ENCODE measurements at regions of chr10 and their contacts with region 1.

Region 1: GRCh38 chr10:103592186-103593021 is 98.9 kb downstream of the NEURL1 start:
- DNase-seq: no peak
- H3K4me3 ChIP-seq: no peak overlapping the region
- H3K27me3 ChIP-seq: no peaks in the 10 kb centered on the region
- CTCF ChIP-seq: peak; percentile 76

Region 2: DNA sequence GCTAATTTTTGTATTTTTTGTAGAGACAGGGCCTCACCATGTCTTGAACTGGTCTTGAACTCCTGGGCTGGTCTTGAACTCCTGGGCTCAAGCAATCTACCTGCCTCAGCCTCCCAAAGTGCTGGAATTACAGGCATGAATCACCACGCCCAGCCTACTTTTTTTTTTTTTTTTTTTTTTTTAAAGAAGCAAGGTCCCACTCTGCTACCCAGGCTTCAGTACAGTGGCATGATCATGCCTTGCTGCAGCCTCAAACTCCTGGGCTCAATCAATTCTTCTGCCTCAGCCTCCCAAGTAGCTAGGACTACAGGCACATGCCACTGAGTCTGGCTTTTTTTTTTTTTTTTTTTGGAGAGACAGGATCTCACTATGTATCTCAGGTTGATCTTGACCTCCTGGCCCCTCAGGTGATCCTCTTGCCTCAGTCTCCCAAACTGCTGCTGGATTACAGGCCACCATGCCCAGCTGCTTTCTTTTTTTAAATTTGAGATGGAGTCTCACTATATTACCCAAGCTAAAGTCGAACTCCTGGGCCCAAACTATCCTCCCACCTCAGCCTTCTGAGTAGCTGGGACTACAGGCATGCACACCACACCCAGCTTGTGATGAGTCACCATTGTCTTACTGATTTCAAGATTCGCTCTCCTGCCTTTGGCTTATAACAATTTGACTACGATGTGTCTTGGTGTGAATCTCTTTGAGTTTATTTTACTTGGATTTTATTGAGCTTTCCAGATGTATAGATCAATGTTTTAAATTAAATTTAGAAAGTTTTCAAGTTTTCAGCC is 337.7 kb before region 1 on chr10:
- CTCF ChIA-PET with region 1: no interaction called
- POLR2A ChIA-PET with region 1: no interaction called
- DNase-seq: no peak
- H3K4me3 ChIP-seq: no peak overlapping the region
- H3K27me3 ChIP-seq: no peaks in the 10 kb centered on the region
- CTCF ChIP-seq: no peak

Region 3: GRCh38 chr10:103458720-103459119 is 133.7 kb before region 1 on chr10 and contains the start of gene CALHM1:
- CTCF ChIA-PET with region 1: no interaction called
- POLR2A ChIA-PET with region 1: no interaction called
- DNase-seq: no peak
- H3K4me3 ChIP-seq: no peak within 1 kb of the TSS
- H3K27me3 ChIP-seq: no peaks in the 10 kb centered on the region
- CTCF ChIP-seq: no peak
- polyA plus RNA-seq, gene CALHM1: not detected in 2 replicates

Region 4: GRCh38 chr10:103517234-103518085 is 74.9 kb before region 1 on chr10:
- CTCF ChIA-PET with region 1: no interaction called
- POLR2A ChIA-PET with region 1: no interaction called
- DNase-seq: no peak
- H3K4me3 ChIP-seq: no peak overlapping the region
- H3K27me3 ChIP-seq: no peaks in the 10 kb centered on the region; the same call in none of the 2 replicates
- CTCF ChIP-seq: no peak

Region 5: GRCh38 chr10:103576862-103577261 is 15.5 kb before region 1 on chr10:
- CTCF ChIA-PET with region 1: interaction called, 13 read pairs
- POLR2A ChIA-PET with region 1: no interaction called
- DNase-seq: no peak
- H3K4me3 ChIP-seq: no peak overlapping the region
- H3K27me3 ChIP-seq: peaks cover 7% of the 10 kb centered on the region
- CTCF ChIP-seq: no peak